Activated naive CD4-positive, alpha-beta T cell treated with anti-CD3 and anti-CD28 coated beads for 36 hours (primary cell): ENCODE measurements at regions of chr10 and their contacts with region 1.

Region 1: GRCh38 chr10:128069351-128070051 is 56.7 kb downstream of the MKI67 start:
- DNase-seq: peak; percentile 87
- H3K4me3 Mint-ChIP-seq: no peak overlapping the region
- H3K27ac Mint-ChIP-seq: no peak overlapping the region
- H3K4me1 Mint-ChIP-seq: peaks cover 33% of the 10 kb centered on the region
- H3K27me3 Mint-ChIP-seq: no peaks in the 10 kb centered on the region

Region 2: GRCh38 chr10:127715782-127716378 is 353.6 kb before region 1 on chr10:
- CTCF ChIA-PET with region 1: interaction called, 4 read pairs
- intact Hi-C with region 1: loop called (anchors 1 kb)
- DNase-seq: no peak
- H3K4me3 Mint-ChIP-seq: no peak overlapping the region
- H3K27ac Mint-ChIP-seq: no peak overlapping the region
- H3K4me1 Mint-ChIP-seq: no peaks in the 10 kb centered on the region
- H3K27me3 Mint-ChIP-seq: no peaks in the 10 kb centered on the region

Region 3: GRCh38 chr10:127906548-127907377 is 162.7 kb before region 1 on chr10 and contains the start of gene PTPRE:
- CTCF ChIA-PET with region 1: interaction called, 22 read pairs
- intact Hi-C with region 1: loop called (anchors 1 kb)
- DNase-seq: peak; percentile 68
- H3K4me3 Mint-ChIP-seq: peak within 1 kb of the TSS; percentile 36
- H3K27ac Mint-ChIP-seq: no peak within 1 kb of the TSS
- H3K4me1 Mint-ChIP-seq: no peaks in the 10 kb centered on the region
- H3K27me3 Mint-ChIP-seq: peaks cover 20% of the 10 kb centered on the region
- total RNA-seq, gene PTPRE: 13.4 to 16.4 TPM

Region 4: DNA sequence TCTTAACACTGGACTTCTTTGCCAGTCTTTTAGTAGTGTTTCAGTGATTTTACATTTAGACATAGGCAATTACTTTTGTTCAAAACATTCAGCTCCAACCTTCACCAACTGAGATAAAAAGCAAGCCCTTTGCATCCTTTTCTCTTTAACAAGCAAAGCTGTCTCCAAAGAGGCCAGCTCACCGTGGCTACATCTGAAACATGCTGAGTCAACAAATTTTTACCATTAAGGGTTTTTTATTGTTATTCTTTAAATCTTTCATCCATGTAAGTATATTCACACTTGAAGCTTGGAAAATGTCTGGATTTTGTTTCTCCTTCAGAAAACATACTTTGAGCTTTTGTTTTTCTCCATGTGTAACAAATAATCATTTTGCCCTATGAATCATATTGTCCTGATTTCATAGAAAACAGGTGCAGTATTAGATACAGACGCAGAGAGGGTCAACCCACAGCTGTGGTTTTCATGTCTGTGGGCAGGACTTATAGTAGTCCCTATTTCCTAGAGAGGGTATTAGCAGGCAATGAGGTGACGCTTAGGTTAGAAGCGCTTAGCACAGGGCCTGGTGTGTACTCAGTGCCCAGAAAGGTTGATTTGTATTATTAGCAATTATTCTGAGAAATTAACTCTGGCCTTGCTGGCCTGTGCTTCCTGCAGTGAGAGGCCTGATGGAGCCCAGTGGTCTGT is 42.7 kb before region 1 on chr10:
- CTCF ChIA-PET with region 1: interaction called, 281 read pairs
- intact Hi-C with region 1: no loop called
- DNase-seq: peak; percentile 56
- H3K4me3 Mint-ChIP-seq: no peak overlapping the region
- H3K27ac Mint-ChIP-seq: no peak overlapping the region
- H3K4me1 Mint-ChIP-seq: peaks cover 13% of the 10 kb centered on the region
- H3K27me3 Mint-ChIP-seq: no peaks in the 10 kb centered on the region

Region 5: GRCh38 chr10:128035557-128035973 is 33.9 kb before region 1 on chr10:
- CTCF ChIA-PET with region 1: interaction called, 281 read pairs
- intact Hi-C with region 1: loop called (anchors 1 kb)
- DNase-seq: peak; percentile 78
- H3K4me3 Mint-ChIP-seq: no peak overlapping the region
- H3K27ac Mint-ChIP-seq: no peak overlapping the region
- H3K4me1 Mint-ChIP-seq: peaks cover 3% of the 10 kb centered on the region
- H3K27me3 Mint-ChIP-seq: no peaks in the 10 kb centered on the region

Region 6: DNA sequence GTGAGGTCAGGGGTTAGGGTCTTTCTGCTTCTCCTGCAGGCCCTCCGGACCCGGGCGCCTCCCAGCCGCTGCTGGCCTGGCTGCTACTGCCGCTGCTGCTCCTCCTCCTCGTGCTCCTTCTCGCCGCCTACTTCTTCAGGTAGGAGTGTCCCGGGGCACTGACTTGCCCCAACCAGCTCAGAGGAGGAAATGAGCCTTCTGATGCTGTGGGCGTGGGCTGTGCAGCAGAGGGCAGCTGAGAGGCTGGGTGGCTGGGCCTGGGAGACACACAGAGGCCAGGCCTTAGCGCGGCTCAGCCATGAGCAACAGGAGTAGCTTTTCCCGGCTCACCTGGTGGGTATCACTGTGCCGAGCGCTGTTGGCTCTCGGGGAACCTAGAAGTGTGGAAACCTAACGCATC is 22.1 kb before region 1 on chr10:
- CTCF ChIA-PET with region 1: interaction called, 74 read pairs
- intact Hi-C with region 1: loop called (anchors 1 kb)
- DNase-seq: peak; percentile 92
- H3K4me3 Mint-ChIP-seq: peak overlapping the region; percentile 84
- H3K27ac Mint-ChIP-seq: peak overlapping the region; percentile 95
- H3K4me1 Mint-ChIP-seq: peaks cover 44% of the 10 kb centered on the region
- H3K27me3 Mint-ChIP-seq: no peaks in the 10 kb centered on the region

Region 7: GRCh38 chr10:128087884-128088709 is 18.6 kb after region 1 on chr10:
- CTCF ChIA-PET with region 1: interaction called, 10 read pairs
- intact Hi-C with region 1: no loop called
- DNase-seq: no peak
- H3K4me3 Mint-ChIP-seq: no peak overlapping the region
- H3K27ac Mint-ChIP-seq: no peak overlapping the region
- H3K4me1 Mint-ChIP-seq: peaks cover 4% of the 10 kb centered on the region
- H3K27me3 Mint-ChIP-seq: no peaks in the 10 kb centered on the region